Posterior vena cava (tissue), 2 donors: ENCODE measurements at regions of chr10 and their contacts with region 1.

Region 1: DNA sequence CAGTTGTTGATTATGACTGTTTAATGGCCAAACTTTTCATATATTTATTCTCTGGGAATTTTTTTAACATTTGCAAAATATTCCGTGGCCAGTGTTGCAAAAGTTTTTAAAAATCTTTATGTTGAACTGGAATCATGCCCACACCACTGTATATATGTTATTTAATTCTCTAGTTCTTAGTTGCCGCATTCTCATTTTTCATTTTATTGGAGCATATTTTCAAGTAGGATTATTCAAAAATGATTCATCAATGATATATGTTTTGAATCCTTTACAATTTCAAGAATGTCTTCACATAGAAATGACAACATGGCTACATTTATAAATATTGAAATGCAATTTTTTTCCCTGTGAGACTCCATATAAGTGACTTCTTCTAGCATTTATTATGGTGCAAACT is 188.6 kb upstream of the LRRTM3 start:
- DNase-seq: no peak

Region 2: DNA sequence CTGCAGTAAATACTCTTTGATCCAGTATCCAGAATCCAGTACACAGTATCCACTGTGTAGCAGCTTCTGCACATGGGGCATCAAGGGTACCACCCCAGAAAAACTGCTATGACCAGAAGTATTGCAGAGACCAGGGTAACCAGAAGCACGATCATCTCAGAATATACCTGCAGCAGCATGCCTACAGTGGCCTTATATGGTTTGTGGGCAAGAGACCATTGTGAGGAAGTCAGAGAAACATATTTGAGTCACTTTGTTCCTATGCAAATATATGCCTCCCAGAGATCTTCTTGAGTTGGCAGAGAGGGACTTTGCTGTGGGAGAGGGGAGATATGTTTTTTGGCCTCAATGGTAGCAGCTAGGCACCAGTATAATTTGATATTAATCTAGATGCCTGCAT is 17.8 kb before region 1 on chr10:
- intact Hi-C with region 1: loop called in 1 of 2 experiments (anchors 1 kb)
- DNase-seq: no peak